Endothelial cell of umbilical vein (primary cell): ENCODE measurements at regions of chr11 and their contacts with region 1.

Region 1: DNA sequence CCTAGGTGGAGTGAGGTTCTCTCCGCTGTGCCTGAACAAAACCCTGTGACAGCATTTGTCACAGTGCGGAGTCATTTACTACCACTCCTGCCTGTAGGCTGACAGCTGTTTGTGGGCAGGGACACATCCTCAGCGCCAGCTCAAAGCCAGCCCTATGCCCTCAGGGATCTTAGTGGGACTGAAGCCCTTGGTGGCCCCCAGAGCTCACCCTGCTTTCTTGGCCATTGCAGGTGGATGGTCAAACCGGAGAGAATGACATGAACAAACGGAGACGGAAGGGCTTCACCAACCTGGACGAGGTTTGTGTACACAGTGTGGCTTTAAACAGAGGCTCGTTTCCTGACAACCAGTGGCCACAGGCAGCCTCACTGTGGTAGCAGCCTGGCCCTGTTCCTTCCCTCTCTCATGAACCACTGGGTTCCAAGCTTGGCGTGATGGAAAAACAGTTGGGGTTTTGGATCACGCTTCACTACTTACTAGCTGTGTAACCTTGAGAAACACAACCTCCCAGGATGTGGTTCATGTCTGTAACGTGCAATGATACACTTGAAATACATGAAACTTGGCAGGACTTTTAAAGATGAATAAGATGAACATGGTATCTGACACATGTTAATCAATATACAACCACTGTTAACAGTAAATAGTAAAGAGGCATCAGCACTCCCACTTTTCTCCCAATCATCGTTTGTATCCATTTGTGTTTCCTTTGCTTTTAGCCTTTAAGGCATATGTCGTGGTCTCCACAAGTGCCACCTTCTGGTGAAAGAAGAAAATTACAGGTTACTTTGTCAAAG is 125.8 kb downstream of the MICAL2 start:
- DNase-seq: peak; percentile 71
- H3K4me3 ChIP-seq: no peak overlapping the region
- H3K27ac ChIP-seq: peak overlapping the region; percentile 36
- H3K4me1 ChIP-seq: peaks cover 49% of the 10 kb centered on the region
- H3K27me3 ChIP-seq: no peaks in the 10 kb centered on the region
- CTCF ChIP-seq: peak; percentile 45 to 54
- POLR2A ChIP-seq: no peak

Region 2: DNA sequence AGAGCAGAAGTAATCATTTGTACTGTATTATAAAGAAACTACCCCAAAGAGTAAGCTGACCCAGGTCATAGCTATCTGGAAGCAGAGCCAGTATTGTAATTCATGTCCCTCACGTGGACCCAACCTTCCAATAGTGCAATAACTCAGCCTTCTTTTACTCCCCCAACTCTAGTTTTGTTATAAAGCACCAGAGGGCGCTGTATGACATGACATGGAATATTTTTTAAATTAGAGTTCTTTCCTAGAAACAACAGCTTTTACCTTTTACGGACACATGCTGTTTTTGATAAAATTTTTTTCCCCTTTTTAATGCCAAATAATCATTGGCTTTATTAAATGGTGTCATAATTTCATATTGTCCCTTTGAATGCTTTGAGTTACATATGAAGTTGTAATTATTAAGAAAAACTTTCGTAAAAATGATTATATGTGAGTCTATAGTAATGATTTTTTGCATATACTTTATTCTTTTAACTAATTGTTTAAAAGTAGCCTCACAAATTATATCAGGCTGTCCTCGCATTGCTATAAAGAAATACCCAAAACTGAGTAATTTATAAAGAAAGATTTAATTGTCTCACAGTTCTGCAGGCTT is 304.6 kb before region 1 on chr11:
- CTCF ChIA-PET with region 1: interaction called, 13 read pairs
- POLR2A ChIA-PET with region 1: no interaction called
- dilution Hi-C with region 1: no loop called
- intact Hi-C with region 1: no loop called
- DNase-seq: peak; percentile 79
- H3K4me3 ChIP-seq: no peak overlapping the region
- H3K27ac ChIP-seq: no peak overlapping the region
- H3K4me1 ChIP-seq: peaks cover 6% of the 10 kb centered on the region
- H3K27me3 ChIP-seq: no peaks in the 10 kb centered on the region
- CTCF ChIP-seq: peak; percentile 32 to 51
- POLR2A ChIP-seq: no peak

Region 3: GRCh38 chr11:12110201-12110713 is 125.9 kb before region 1 on chr11 and contains the start of gene MICAL2:
- CTCF ChIA-PET with region 1: interaction called, 4 read pairs
- POLR2A ChIA-PET with region 1: no interaction called
- dilution Hi-C with region 1: no loop called
- intact Hi-C with region 1: loop called (anchors 2 kb)
- DNase-seq: peak; percentile 87
- H3K4me3 ChIP-seq: peak within 1 kb of the TSS; percentile 50 to 86 (median 73)
- H3K27ac ChIP-seq: peak within 1 kb of the TSS; percentile 56
- H3K4me1 ChIP-seq: peaks cover 40% of the 10 kb centered on the region
- H3K27me3 ChIP-seq: no peaks in the 10 kb centered on the region
- CTCF ChIP-seq: no peak
- POLR2A ChIP-seq: peak; percentile 85
- total RNA-seq, gene MICAL2: 200 and 222 TPM in 2 replicates

Region 4: GRCh38 chr11:12167098-12168000 is 68.8 kb before region 1 on chr11:
- CTCF ChIA-PET with region 1: interaction called, 30 read pairs
- POLR2A ChIA-PET with region 1: interaction called, 3 read pairs
- dilution Hi-C with region 1: no loop called
- intact Hi-C with region 1: loop called (anchors 1 kb)
- DNase-seq: peak; percentile 92
- H3K4me3 ChIP-seq: no peak overlapping the region
- H3K27ac ChIP-seq: peak overlapping the region; percentile 95
- H3K4me1 ChIP-seq: peaks cover 59% of the 10 kb centered on the region
- H3K27me3 ChIP-seq: no peaks in the 10 kb centered on the region
- CTCF ChIP-seq: no peak
- POLR2A ChIP-seq: peak; percentile 78

Region 5: DNA sequence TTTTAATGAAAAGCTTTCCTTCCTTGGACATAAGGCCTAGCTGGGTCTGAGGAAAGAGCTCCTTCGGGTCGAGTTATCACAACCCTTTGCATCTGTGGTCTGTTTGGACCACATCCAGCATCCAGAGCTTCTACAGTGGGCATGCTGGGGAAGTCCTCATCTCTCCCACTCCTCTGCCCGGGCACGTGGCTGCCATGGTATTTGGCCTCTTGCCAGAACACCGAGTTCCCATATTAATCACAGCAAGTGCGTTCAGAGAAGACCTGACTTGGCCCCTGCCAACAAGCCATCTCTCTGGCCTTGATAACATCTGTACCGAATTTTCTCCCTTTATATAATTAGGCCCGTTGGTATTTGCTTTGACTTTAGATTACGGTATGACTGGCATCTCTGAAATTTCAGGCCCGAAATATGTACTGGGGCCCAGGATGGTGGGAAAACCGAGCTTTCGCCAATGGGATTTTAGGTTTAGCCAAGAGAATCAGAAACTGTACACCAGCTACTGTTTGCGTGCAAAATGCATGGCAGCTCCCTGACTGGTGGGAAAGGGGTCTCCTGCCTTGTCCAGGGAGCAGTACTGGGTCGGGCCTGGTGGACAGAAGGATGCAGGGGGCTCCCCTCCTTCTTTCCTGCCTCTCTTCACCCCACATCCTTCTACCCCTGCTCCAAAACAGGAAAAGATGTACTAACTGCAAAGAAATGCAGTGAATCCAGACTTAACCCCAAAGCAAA is 35.7 kb before region 1 on chr11:
- CTCF ChIA-PET with region 1: interaction called, 33 read pairs
- POLR2A ChIA-PET with region 1: interaction called, 3 read pairs
- dilution Hi-C with region 1: no loop called
- intact Hi-C with region 1: loop called (anchors 1 kb)
- DNase-seq: peak; percentile 93
- H3K4me3 ChIP-seq: no peak overlapping the region
- H3K27ac ChIP-seq: peak overlapping the region; percentile 94
- H3K4me1 ChIP-seq: peaks cover 45% of the 10 kb centered on the region
- H3K27me3 ChIP-seq: no peaks in the 10 kb centered on the region
- CTCF ChIP-seq: no peak
- POLR2A ChIP-seq: no peak

Region 6: DNA sequence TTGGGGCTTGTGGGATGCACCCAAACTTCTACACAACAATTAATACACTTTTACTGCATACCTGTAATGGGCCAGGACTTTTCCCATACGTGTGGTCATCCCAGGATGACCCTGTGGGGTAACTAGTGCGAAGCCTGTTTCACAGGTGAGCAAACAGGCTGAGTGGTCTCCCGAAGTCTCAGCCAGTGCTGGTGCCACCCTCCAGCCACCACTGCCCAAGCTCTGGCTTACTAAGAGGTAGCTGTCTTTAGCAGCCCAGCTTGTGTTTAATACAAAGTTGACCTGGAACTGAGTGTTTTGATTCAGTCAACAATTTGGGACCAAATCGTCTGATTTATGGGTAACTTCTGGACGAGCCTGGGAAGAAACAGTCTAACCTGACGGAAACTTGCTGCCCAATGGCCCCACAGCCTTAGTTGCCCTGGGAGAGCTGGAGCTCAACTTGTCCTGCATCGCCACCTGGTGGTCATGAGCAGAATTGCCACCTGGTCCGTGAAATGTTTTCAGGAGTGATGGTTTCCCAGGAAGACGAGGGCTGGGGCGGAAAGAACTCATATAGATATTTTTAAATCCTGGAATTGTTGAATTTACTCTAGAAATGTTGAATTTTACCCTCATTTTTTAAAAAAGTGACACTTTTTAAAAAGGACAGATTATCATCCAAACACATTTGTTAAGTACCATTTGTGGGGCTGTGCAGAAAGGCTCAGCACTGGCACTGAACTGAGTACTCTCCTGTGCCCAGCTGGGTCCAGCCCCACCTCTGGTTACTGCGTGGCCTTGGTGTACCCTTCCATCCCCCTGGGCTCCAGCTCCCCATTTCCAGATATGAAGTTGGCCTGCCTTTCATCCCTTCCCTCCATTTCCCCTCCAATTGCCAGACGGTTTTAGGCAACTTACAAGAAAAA is 45.7 kb after region 1 on chr11:
- CTCF ChIA-PET with region 1: interaction called, 15 read pairs
- POLR2A ChIA-PET with region 1: no interaction called
- dilution Hi-C with region 1: no loop called
- intact Hi-C with region 1: loop called (anchors 1 kb)
- DNase-seq: peak; percentile 81
- H3K4me3 ChIP-seq: no peak overlapping the region
- H3K27ac ChIP-seq: no peak overlapping the region
- H3K4me1 ChIP-seq: peaks cover 27% of the 10 kb centered on the region
- H3K27me3 ChIP-seq: no peaks in the 10 kb centered on the region
- CTCF ChIP-seq: peak; percentile 82 to 91
- POLR2A ChIP-seq: no peak

Region 7: GRCh38 chr11:12417728-12418611 is 181.8 kb after region 1 on chr11:
- CTCF ChIA-PET with region 1: no interaction called
- POLR2A ChIA-PET with region 1: no interaction called
- dilution Hi-C with region 1: no loop called
- intact Hi-C with region 1: no loop called
- DNase-seq: no peak
- H3K4me3 ChIP-seq: no peak overlapping the region
- H3K27ac ChIP-seq: no peak overlapping the region
- H3K4me1 ChIP-seq: no peaks in the 10 kb centered on the region
- H3K27me3 ChIP-seq: no peaks in the 10 kb centered on the region
- CTCF ChIP-seq: no peak
- POLR2A ChIP-seq: no peak